ENCODE measurements at regions of chr5 and their contacts with region 1.

Region 1: DNA sequence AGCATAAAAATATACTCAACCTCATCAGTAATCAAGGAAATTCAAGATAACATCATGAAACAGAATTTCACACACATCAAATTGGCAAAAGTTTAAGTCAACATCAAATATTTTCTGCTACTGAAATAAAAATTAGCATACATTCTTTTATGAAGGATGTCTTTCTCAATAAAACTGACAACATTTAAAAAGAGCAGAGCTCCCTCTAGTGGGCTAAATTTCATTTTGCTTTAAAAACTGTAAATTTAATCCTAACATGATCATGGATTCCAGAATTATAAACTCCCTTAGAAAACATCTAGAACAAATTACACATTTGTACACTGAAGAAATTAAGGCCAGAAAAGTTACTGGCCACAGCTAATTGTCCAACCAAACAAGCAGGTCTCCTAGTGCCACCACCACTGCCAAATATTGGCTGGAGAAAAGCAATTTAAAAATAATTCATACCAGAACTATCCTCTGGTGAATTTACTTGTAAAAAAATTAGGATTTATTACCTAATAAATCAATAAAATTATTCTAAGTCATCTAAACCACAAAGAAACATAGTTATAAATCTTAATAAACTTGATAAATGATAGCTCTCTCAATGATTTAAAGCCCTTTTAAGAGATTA is 31.2 kb downstream of the DEPDC1B start:
- DNase-seq: peak; percentile 65
- H3K4me3 ChIP-seq: no peak overlapping the region
- H3K27ac ChIP-seq: no peak overlapping the region
- H3K4me1 ChIP-seq: peaks cover 13% of the 10 kb centered on the region
- H3K27me3 ChIP-seq: no peaks in the 10 kb centered on the region
- CTCF ChIP-seq: peak; percentile 76

Region 2: DNA sequence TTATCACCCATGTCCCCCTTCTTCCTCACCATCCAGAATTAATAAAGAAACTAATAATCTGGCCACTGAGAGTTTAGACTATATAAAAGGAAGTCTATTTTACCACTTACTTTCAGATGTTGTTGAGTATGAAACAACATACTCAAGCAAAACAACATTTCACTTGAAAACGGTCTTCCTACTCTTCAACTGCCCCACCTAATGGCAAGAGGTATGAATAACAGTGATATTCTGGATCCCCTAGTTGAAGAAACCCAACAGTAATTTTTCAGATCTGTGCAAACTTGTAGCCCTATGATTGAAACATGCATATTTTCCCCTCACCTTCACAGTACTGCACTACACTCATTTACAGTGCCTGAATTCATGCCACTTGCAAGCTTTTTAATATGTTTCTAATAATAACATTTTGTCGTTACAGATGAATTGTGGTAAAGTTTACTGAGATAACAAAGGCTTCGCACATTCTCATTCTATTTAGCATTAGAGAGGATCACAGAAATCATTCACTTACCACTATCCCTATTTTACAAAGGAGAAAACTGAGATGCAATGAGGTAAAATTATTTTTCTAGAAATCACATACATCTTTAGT is 507.4 kb before region 1 on chr5:
- CTCF ChIA-PET with region 1: no interaction called
- POLR2A ChIA-PET with region 1: no interaction called
- intact Hi-C with region 1: loop called (anchors 10 kb)
- DNase-seq: peak; percentile 59
- H3K4me3 ChIP-seq: no peak overlapping the region
- H3K27ac ChIP-seq: no peak overlapping the region
- H3K4me1 ChIP-seq: no peaks in the 10 kb centered on the region
- H3K27me3 ChIP-seq: peaks cover 28% of the 10 kb centered on the region
- CTCF ChIP-seq: peak; percentile 69

Region 3: DNA sequence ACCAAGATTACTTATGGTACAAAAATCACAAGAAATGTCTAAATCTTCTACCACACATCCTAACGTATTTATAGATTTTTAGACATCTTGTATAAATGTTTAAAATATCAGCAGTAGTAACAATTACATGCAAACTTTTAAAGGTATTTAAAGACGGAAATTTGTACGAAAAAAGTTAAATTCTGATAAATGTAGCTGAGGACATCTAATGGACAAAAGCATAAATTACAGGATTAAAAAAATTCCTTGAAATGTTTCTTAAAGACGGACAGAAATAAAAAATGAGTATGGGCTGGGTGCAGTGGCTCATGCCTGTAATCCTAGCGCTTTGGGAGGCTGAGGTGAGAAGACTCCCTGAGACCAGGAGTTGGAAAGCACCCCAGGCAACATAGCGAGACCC is 260.2 kb after region 1 on chr5:
- CTCF ChIA-PET with region 1: no interaction called
- POLR2A ChIA-PET with region 1: no interaction called
- intact Hi-C with region 1: no loop called
- DNase-seq: no peak
- H3K4me3 ChIP-seq: no peak overlapping the region
- H3K27ac ChIP-seq: no peak overlapping the region
- H3K4me1 ChIP-seq: no peaks in the 10 kb centered on the region
- H3K27me3 ChIP-seq: no peaks in the 10 kb centered on the region
- CTCF ChIP-seq: peak; percentile 47; the same call in 1 of the 2 replicates